ENCODE measurements at regions of chr9 and their contacts with region 1.

Region 1: DNA sequence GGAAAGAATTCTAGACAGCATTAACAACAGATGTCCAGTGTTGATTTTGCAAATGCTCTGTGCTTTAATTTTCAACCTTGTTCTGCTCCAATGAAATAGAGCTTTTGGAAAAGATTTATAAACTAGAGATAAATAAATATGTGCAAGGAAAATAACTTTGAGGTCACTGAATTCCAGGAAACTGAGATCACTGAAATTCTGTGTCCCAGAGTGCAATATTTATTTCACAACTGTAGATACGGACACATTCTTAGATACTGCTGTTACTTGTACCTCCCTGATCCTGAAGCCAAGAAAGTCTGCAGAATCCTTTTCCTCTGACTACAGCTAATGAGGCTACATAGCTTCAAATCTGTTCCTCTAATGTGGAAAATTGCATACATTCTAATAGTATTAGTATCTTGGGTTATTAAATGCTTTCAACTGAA is 222.9 kb downstream of the DOCK8 start:
- DNase-seq: no peak
- ATAC-seq: no peak
- H3K4me3 ChIP-seq: no peak overlapping the region
- H3K4me3 Mint-ChIP-seq: no peak overlapping the region
- H3K27ac ChIP-seq: no peak overlapping the region
- H3K27ac Mint-ChIP-seq: no peak overlapping the region
- H3K4me1 ChIP-seq: no peaks in the 10 kb centered on the region
- H3K4me1 Mint-ChIP-seq: no peaks in the 10 kb centered on the region
- H3K27me3 ChIP-seq: no peaks in the 10 kb centered on the region
- H3K27me3 Mint-ChIP-seq: no peaks in the 10 kb centered on the region
- CTCF ChIP-seq: no peak

Region 2: DNA sequence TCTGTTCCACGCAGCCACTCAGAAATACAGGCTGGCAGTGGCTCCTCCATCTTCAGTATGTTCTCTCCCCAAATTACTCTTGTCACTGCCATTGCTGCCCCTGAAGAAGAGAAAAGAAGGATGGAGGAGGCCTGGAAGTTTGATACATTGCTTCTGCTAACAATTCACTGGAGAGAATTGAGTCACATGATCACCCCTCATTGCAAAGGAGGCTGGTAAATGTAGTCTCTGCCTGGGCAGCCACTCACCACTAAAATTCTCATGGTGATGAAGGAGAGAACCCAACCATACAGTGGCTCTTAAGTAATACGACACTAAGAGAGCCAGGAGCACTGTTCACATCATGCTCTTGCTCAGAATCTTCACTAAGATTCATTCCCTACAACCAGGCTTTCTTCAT is 110.9 kb before region 1 on chr9:
- CTCF ChIA-PET with region 1: no interaction called
- POLR2A ChIA-PET with region 1: no interaction called
- intact Hi-C with region 1: loop called in 1 of 2 experiments (anchors 5 kb)
- DNase-seq: no peak
- ATAC-seq: no peak
- H3K4me3 ChIP-seq: no peak overlapping the region
- H3K4me3 Mint-ChIP-seq: no peak overlapping the region
- H3K27ac ChIP-seq: no peak overlapping the region
- H3K27ac Mint-ChIP-seq: peak overlapping the region; percentile 60
- H3K4me1 ChIP-seq: no peaks in the 10 kb centered on the region
- H3K4me1 Mint-ChIP-seq: peaks cover 14% of the 10 kb centered on the region
- H3K27me3 ChIP-seq: no peaks in the 10 kb centered on the region
- H3K27me3 Mint-ChIP-seq: no peaks in the 10 kb centered on the region
- CTCF ChIP-seq: no peak

Measured in CD8-positive, alpha-beta T cell (primary cell).